Activated CD8-positive, alpha-beta T cell treated with anti-CD3 and anti-CD28 coated beads for 36 hours (primary cell): ENCODE measurements at regions of chr1 and their contacts with region 1.

Region 1: DNA sequence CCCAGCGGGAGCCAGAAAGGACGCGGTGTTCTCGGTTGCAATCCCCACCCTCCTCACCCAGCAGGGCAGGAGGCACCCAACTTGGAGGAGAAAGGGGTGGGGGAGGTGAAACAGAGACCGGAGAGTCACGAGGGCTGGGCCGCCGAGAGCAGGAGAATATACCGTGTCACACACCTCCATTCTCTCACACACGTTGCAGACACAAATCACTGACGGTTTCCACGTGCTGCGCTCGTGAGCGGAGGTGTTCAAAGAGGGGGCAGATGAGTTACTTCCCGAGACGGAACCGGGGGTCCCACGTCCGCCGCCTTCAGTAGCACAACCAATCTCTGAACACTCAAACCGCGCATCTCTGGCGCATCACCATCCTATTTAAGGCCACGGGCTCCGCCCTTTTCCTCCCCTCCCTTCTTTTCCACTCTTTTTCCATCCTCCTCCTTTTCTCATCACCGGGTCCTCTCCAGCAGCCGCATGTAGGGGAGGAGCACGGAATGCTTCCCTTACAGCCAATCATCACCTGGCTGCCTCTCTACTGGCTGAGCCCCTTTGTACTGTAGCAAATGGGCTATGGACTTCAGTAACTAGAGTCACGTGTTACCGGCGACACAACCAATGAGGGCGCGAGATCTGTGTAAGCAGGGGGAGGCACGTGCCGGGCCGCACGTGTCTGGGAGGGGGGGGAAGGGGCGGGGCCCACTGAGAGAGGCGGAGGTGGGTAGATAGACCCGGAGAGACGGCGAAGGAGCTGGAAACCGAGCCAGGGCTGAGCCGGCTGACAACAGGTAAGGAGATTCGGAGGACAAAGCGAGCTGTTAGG is at the start of gene CIART:
- DNase-seq: peak; percentile 87
- ATAC-seq: peak; percentile 90
- H3K4me3 Mint-ChIP-seq: peak within 1 kb of the TSS; percentile 80
- H3K27ac Mint-ChIP-seq: peak within 1 kb of the TSS; percentile 89
- H3K4me1 Mint-ChIP-seq: peaks cover 21% of the 10 kb centered on the region
- H3K27me3 Mint-ChIP-seq: no peaks in the 10 kb centered on the region
- CTCF ChIP-seq: no peak
- total RNA-seq, gene CIART: 3.6 to 5.1 TPM

Region 2: GRCh38 chr1:150268705-150269403 is 13.2 kb before region 1 on chr1 and contains the start of gene APH1A:
- CTCF ChIA-PET with region 1: interaction called, 14 read pairs
- POLR2A ChIA-PET with region 1: interaction called, 7 read pairs
- intact Hi-C with region 1: no loop called
- DNase-seq: peak; percentile 97
- ATAC-seq: peak; percentile 98
- H3K4me3 Mint-ChIP-seq: peak within 1 kb of the TSS; percentile 96
- H3K27ac Mint-ChIP-seq: peak within 1 kb of the TSS; percentile 96
- H3K4me1 Mint-ChIP-seq: peaks cover 18% of the 10 kb centered on the region
- H3K27me3 Mint-ChIP-seq: no peaks in the 10 kb centered on the region
- CTCF ChIP-seq: no peak
- total RNA-seq, gene APH1A: 83.7 to 87.4 TPM